Activated T-helper 1 cell treated with anti-CD3 and anti-CD28 coated beads, Interleukin-12 subunit alpha, Interleukin-12 subunit beta, Interleukin-2, Interleukin-4 antibody, amounts not matched to agents 30 ng/mL and 10 ng/mL and 1 ng/mL, durations not matched to agents 14 hours and 24 hours and 36 hours (primary cell): ENCODE measurements at regions of chr18 and their contacts with region 1.

Region 1: GRCh38 chr18:13216092-13216582 is 2.4 kb upstream of the LDLRAD4 start:
- DNase-seq: peak; percentile 39
- H3K4me3 Mint-ChIP-seq: peak overlapping the region; percentile 87
- H3K27ac Mint-ChIP-seq: peak overlapping the region; percentile 92
- H3K4me1 Mint-ChIP-seq: peaks cover 31% of the 10 kb centered on the region
- H3K27me3 Mint-ChIP-seq: peaks cover 32% of the 10 kb centered on the region

Region 2: DNA sequence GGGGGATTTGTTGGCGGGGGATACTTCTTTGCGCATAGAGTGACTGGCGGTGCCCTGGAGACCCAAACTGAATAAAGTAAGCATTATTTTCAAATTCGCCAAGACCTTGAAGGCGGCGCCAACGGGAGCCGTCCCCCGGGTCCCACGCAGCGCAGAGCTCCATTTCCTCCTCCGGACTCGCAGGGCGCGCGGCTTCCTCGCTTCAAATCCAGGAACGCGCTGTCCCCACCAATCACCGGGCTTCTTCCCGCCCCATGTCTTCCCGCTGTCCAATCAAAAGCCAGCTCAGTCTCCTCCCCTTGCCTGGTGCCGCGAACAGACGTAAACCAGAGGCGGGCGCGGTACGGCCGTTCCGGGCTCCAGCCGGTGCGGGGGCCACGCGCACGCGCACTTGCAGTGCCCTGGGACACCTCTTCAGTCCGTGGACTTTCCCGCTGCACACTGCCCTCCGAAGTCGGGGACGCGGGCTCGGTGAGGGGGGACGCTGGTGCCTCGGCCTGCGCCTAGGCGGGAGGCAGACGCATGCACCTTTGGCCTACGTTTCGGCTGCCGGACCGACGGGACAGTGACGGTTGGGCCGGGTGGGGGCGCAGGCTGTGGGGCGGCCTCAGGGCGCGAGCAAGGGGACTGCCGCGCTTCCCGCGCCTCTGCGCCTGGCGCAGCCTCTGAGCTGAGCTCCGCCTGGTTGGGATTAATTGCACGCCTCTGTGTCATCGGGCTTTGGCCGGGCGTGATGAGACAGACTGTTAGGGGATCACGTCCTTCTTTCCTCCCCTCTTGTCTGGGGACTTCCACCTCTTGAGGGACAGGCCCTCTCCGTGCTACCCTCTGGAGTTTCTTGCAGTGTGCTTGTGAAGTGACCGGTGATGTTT is 224.9 kb before region 1 on chr18 and contains the start of gene CEP192:
- intact Hi-C with region 1: loop called (anchors 5 kb)
- DNase-seq: peak; percentile 98
- H3K4me3 Mint-ChIP-seq: peak within 1 kb of the TSS; percentile 93
- H3K27ac Mint-ChIP-seq: peak within 1 kb of the TSS; percentile 94
- H3K4me1 Mint-ChIP-seq: peaks cover 24% of the 10 kb centered on the region
- H3K27me3 Mint-ChIP-seq: peaks cover 1% of the 10 kb centered on the region
- total RNA-seq, gene CEP192: 31.2 and 32.0 TPM in 2 replicates

Region 3: GRCh38 chr18:13289481-13290205 is 73.5 kb after region 1 on chr18:
- intact Hi-C with region 1: loop called (anchors 2 kb)
- DNase-seq: no peak
- H3K4me3 Mint-ChIP-seq: no peak overlapping the region
- H3K27ac Mint-ChIP-seq: peak overlapping the region; percentile 67
- H3K4me1 Mint-ChIP-seq: peaks cover 66% of the 10 kb centered on the region
- H3K27me3 Mint-ChIP-seq: peaks cover 3% of the 10 kb centered on the region

Region 4: GRCh38 chr18:13435596-13436327 is 219.6 kb after region 1 on chr18:
- intact Hi-C with region 1: loop called (anchors 1 kb)
- DNase-seq: no peak
- H3K4me3 Mint-ChIP-seq: no peak overlapping the region
- H3K27ac Mint-ChIP-seq: no peak overlapping the region
- H3K4me1 Mint-ChIP-seq: peaks cover 68% of the 10 kb centered on the region
- H3K27me3 Mint-ChIP-seq: no peaks in the 10 kb centered on the region

Region 5: DNA sequence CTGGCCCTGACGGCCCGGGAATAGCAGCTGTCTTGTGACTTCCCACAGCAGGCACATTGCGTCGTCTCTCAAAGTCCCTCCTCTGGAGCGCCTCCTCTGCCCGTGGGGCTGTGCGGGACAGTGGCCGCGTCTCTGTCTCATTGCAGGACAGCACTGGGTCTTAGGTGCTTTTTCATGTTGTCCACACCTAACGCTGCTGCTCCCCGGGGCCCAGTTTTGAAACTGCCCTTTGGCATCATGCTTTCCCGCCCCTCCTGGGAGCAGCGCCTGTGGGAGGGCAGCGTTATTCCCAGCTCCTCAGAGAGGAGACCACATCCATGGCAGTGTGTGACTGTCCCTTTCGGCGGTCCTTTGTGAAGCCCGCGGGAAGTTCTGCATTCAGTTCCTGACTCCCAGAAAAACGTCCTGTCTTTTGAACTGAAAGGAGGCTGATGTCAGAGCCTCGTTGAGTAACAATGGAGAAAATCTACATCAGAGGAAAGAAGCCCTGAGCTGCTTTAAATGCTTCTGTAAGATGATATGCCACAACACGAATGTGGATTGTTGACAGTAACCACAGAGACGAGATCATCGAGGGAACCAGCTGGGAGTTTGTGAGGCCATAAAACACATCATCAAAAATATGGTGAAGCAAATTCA is 284.2 kb after region 1 on chr18:
- intact Hi-C with region 1: loop called (anchors 2 kb)
- DNase-seq: no peak
- H3K4me3 Mint-ChIP-seq: no peak overlapping the region
- H3K27ac Mint-ChIP-seq: no peak overlapping the region
- H3K4me1 Mint-ChIP-seq: peaks cover 32% of the 10 kb centered on the region
- H3K27me3 Mint-ChIP-seq: no peaks in the 10 kb centered on the region

Region 6: GRCh38 chr18:13611601-13612195 is 395.6 kb after region 1 on chr18:
- intact Hi-C with region 1: loop called (anchors 5 kb)
- DNase-seq: no peak
- H3K4me3 Mint-ChIP-seq: peak overlapping the region; percentile 80
- H3K27ac Mint-ChIP-seq: peak overlapping the region; percentile 83
- H3K4me1 Mint-ChIP-seq: peaks cover 73% of the 10 kb centered on the region
- H3K27me3 Mint-ChIP-seq: peaks cover 1% of the 10 kb centered on the region

Region 7: DNA sequence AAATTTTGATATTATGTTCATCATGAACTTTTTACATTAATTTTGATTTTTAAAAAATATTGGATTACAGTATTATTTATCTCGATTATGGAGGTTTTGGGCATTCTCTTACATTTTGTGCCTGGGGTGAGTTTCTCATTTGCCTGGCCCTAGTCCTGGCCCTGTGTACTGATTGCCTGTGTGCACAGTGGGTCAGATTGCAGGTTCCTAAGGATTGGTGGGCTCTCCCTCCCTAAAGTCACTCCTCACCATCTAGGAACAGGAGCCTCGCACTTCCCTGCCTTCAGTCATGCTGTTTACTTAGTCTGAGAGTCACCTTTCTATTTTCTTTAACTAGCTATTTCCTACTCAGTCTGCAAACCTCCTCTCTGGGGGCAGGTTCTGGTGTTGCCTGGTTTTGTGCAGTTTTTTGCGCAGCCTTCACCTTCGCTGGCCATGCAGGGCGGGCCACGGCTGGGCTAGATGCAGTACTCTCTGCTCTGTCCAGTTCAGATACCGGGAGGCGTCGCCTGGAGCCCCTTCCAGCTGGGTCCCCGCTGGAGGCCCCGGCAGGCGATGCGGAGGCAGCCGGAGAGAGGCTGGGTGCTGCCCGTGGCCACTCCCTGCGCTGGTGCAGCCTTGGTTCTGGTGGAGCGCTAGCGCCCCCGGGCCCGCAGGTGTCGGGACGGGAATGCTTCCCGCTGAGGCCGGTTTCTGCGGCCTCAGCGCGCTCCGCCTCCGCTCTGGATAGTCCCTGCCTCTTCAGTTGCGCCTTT is 584.5 kb after region 1 on chr18:
- intact Hi-C with region 1: loop called (anchors 2 kb)
- DNase-seq: peak; percentile 16
- H3K4me3 Mint-ChIP-seq: no peak overlapping the region
- H3K27ac Mint-ChIP-seq: no peak overlapping the region
- H3K4me1 Mint-ChIP-seq: peaks cover 5% of the 10 kb centered on the region
- H3K27me3 Mint-ChIP-seq: peaks cover 43% of the 10 kb centered on the region